ENCODE measurements at regions of chr15 and their contacts with region 1.

Region 1: DNA sequence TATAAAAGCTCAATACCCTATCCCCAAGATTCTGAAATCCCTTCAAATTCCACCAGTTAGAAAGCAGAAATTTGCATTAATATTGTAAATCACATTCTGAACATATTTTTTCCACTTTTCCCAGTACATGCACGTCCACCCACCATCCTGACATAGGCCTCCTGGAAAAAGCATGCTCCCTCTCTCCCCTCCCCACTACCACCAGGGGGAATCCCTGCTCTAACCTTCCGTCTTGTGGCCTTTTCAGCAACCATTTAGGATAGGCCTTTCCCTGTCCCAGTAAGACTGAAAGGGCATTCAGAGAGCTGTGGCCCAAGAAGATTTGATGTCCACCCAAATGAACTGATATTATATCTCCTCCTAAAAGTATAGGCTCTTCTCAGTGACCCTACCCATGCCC is 182.1 kb downstream of the ARRDC4 start:
- DNase-seq: no peak
- ATAC-seq: no peak

Region 2: GRCh38 chr15:98213346-98213979 is 70.9 kb after region 1 on chr15:
- intact Hi-C with region 1: loop called (anchors 2 kb)
- DNase-seq: no peak
- ATAC-seq: no peak